ENCODE measurements at regions of chr19 and their contacts with region 1.

Region 1: GRCh38 chr19:18588611-18589379 is at the start of gene REX1BD:
- DNase-seq: no peak
- ATAC-seq: peak; percentile 84
- H3K4me3 ChIP-seq: peak within 1 kb of the TSS; percentile 65 to 70
- H3K27ac ChIP-seq: peak within 1 kb of the TSS; percentile 76
- H3K4me1 ChIP-seq: no peaks in the 10 kb centered on the region
- H3K27me3 ChIP-seq: no peaks in the 10 kb centered on the region
- CTCF ChIP-seq: peak; percentile 92
- total RNA-seq, gene REX1BD: 32.0 TPM

Region 2: GRCh38 chr19:18233224-18233825 is 355.5 kb before region 1 on chr19:
- CTCF ChIA-PET with region 1: no interaction called
- POLR2A ChIA-PET with region 1: no interaction called
- in situ Hi-C with region 1: no loop called
- intact Hi-C with region 1: no loop called
- DNase-seq: no peak
- ATAC-seq: no peak
- H3K4me3 ChIP-seq: no peak overlapping the region
- H3K27ac ChIP-seq: no peak overlapping the region
- H3K4me1 ChIP-seq: no peaks in the 10 kb centered on the region
- H3K27me3 ChIP-seq: no peaks in the 10 kb centered on the region
- CTCF ChIP-seq: no peak

Region 3: DNA sequence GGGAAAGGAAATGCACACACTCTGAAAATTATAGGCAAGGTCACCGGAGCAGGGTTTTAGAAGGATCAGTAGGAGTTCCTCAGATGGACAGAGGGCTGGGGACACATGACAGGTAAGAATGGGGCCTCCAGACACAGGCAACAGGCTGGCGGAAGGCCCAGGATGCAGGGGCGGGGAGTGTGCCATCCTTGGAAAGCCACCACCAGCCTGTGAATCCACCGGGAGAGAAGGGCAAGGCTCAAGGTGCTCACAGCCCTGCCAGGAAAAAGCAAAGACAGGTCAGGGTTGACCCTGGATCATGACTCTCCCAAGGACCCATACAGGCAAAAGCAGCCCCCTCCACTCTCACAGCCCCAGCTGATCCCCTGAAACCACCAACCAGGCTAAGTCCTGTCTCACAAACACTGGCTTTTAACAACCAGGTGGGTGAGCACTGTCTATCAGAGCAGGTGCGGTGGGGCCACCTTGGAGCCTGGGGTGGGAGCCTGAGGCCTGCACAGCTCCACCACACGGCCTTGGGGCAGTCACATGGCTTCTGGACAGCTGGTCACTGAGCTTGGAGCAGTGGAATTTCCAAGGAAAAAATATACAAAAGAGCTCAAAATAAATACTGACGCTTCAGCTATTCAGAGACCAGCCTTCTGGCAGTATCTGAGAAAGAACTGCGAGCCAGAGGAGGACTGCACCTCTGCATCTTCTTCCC is 115.6 kb before region 1 on chr19:
- CTCF ChIA-PET with region 1: interaction called, 12 read pairs
- POLR2A ChIA-PET with region 1: no interaction called
- in situ Hi-C with region 1: no loop called
- intact Hi-C with region 1: no loop called
- DNase-seq: no peak
- ATAC-seq: no peak
- H3K4me3 ChIP-seq: no peak overlapping the region
- H3K27ac ChIP-seq: no peak overlapping the region
- H3K4me1 ChIP-seq: 0 out of 2 replicates have a peak, but pooled peaks cover 8% of the 10 kb centered on the region
- H3K27me3 ChIP-seq: no peaks in the 10 kb centered on the region
- CTCF ChIP-seq: no peak

Region 4: GRCh38 chr19:18603255-18603957 is 14.6 kb after region 1 on chr19:
- CTCF ChIA-PET with region 1: no interaction called
- POLR2A ChIA-PET with region 1: no interaction called
- in situ Hi-C with region 1: no loop called
- intact Hi-C with region 1: no loop called
- DNase-seq: no peak
- ATAC-seq: peak; percentile 78
- H3K4me3 ChIP-seq: no peak overlapping the region
- H3K27ac ChIP-seq: no peak overlapping the region
- H3K4me1 ChIP-seq: peaks cover 2% of the 10 kb centered on the region
- H3K27me3 ChIP-seq: peaks cover under 1% of the 10 kb centered on the region
- CTCF ChIP-seq: no peak; the same call in 1 of the 2 replicates

Region 5: GRCh38 chr19:18675779-18676178 is 87.0 kb after region 1 on chr19:
- CTCF ChIA-PET with region 1: interaction called, 4 read pairs
- POLR2A ChIA-PET with region 1: no interaction called
- in situ Hi-C with region 1: no loop called
- intact Hi-C with region 1: loop called (anchors 10 kb)
- DNase-seq: no peak
- ATAC-seq: no peak
- H3K4me3 ChIP-seq: no peak overlapping the region
- H3K27ac ChIP-seq: no peak overlapping the region
- H3K4me1 ChIP-seq: peaks cover 12% of the 10 kb centered on the region
- H3K27me3 ChIP-seq: no peaks in the 10 kb centered on the region
- CTCF ChIP-seq: no peak; the same call in 1 of the 2 replicates

Region 6: GRCh38 chr19:18846862-18847548 is 258.2 kb after region 1 on chr19:
- CTCF ChIA-PET with region 1: interaction called, 12 read pairs
- POLR2A ChIA-PET with region 1: no interaction called
- in situ Hi-C with region 1: no loop called
- intact Hi-C with region 1: loop called (anchors 5 kb)
- DNase-seq: no peak
- ATAC-seq: peak; percentile 95
- H3K4me3 ChIP-seq: no peak overlapping the region
- H3K27ac ChIP-seq: no peak overlapping the region
- H3K4me1 ChIP-seq: no peaks in the 10 kb centered on the region
- H3K27me3 ChIP-seq: no peaks in the 10 kb centered on the region
- CTCF ChIP-seq: peak; percentile 88

Measured in Panc1 (cell line).